CD4-positive, alpha-beta T cell (primary cell): ENCODE measurements at regions of chr7 and their contacts with region 1.

Region 1: DNA sequence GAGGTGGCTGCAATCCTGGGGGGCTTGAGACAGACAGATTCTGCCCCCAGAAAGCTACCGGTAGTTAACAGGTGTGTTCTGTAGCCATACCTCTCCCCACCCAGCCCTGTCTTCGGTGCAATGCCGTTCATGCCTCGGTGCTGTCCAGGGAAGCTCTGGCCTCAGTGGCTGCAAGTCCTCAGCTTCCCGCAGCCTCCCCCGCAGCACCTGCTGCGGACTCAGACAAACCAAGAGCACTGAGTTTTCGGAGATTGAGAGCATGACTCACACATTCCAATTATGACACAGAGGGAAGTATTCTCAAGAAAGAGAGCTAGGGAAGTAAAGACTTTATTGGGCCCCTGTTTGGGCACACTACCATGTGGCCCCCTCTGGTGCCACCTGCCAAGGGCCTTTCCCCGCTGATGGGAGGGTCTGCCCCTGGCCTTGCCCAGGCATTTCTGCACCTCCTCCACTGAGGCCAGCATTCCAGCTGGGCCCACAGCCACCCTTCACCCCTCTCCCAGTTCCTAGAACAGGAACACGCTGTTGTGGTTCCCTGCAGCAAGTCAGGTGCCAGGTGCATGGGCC is 30.2 kb upstream of the EZH2 start:
- DNase-seq: peak in 3 of 14 experiments; percentile 17 to 34 (median 27)
- ATAC-seq: peak; percentile 19
- H3K4me3 ChIP-seq: no peak overlapping the region
- H3K4me3 Mint-ChIP-seq: peak overlapping the region; percentile 51
- H3K27ac ChIP-seq: peak overlapping the region; percentile 18 to 57
- H3K27ac Mint-ChIP-seq: peak overlapping the region; percentile 79
- H3K4me1 ChIP-seq: peaks cover 49% of the 10 kb centered on the region
- H3K4me1 Mint-ChIP-seq: peaks cover 65% of the 10 kb centered on the region
- H3K27me3 ChIP-seq: no peaks in the 10 kb centered on the region
- H3K27me3 Mint-ChIP-seq: no peaks in the 10 kb centered on the region
- CTCF ChIP-seq: no peak

Region 2: DNA sequence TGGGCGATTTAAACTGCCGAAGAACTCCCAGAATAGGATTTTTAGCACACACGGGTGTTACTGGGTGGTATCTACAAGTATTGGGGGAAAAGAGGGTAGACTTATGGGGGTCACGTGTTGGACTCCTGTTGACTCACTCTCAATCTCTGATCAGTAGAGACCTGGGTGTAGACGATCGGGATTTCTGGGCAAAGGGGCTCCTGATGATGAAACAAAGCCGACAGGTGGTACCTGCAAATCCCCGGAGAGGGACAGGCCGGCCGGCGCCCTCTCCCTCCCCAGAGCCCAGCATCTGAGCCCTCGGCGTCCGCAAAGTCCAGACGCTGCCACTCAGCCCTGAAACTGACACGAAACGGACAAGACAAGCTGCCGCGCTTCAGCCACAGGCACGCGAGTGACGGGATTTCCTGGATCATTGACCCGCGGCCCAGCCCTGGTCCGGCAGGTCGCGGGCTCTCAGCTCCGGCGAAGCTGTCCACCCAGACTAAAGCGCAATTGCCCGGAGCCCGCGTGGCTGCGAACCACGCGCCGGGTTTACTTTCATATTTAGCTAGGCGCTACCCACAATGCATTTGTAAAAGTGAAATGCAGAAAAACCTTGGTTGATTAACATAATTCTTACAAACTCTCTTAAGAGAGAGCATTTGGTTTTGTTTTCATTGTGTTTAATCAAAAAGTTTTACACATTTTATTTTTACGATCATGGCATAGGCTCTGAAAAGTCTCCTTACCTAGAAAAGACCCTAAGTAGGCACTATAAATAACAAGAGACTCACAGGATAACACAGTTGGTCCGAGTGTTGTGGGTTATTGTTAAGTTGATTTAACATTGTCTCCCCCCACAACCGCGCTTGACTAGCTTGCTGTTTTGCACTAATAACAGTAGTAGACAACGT is 26.7 kb after region 1 on chr7:
- CTCF ChIA-PET with region 1: interaction called, 8 read pairs
- POLR2A ChIA-PET with region 1: interaction called, 67 read pairs
- intact Hi-C with region 1: loop called in 1 of 2 experiments (anchors 2 kb)
- DNase-seq: peak; percentile 37 to 87 (median 57)
- ATAC-seq: peak; percentile 69
- H3K4me3 ChIP-seq: peak overlapping the region; percentile 89
- H3K4me3 Mint-ChIP-seq: peak overlapping the region; percentile 97
- H3K27ac ChIP-seq: peak overlapping the region; percentile 87 to 88
- H3K27ac Mint-ChIP-seq: peak overlapping the region; percentile 98
- H3K4me1 ChIP-seq: peaks cover 7% of the 10 kb centered on the region
- H3K4me1 Mint-ChIP-seq: peaks cover 27% of the 10 kb centered on the region
- H3K27me3 ChIP-seq: no peaks in the 10 kb centered on the region
- H3K27me3 Mint-ChIP-seq: no peaks in the 10 kb centered on the region
- CTCF ChIP-seq: no peak